Common myeloid progenitor, CD34-positive (primary cell): ENCODE measurements at regions of chr13 and their contacts with region 1.

Region 1: GRCh38 chr13:95403828-95404522 is 102.7 kb upstream of the ABCC4 start:
- DNase-seq: peak; percentile 72 to 84 (median 80)
- H3K4me3 ChIP-seq: peak overlapping the region in 6 of 7 experiments; percentile 53 to 77 (median 59)
- H3K27ac ChIP-seq: no peak overlapping the region
- H3K4me1 ChIP-seq: peaks cover 0 to 10% (median 8%) of the 10 kb centered on the region in 4 experiments
- H3K27me3 ChIP-seq: peaks cover 0 to 3% (median 0%) of the 10 kb centered on the region in 5 experiments

Region 2: GRCh38 chr13:94842901-94843300 is 561.1 kb before region 1 on chr13:
- CTCF ChIA-PET with region 1: no interaction called
- POLR2A ChIA-PET with region 1: no interaction called
- DNase-seq: no peak
- H3K4me3 ChIP-seq: no peak overlapping the region
- H3K27ac ChIP-seq: no peak overlapping the region
- H3K4me1 ChIP-seq: no peaks in the 10 kb centered on the region
- H3K27me3 ChIP-seq: no peaks in the 10 kb centered on the region

Region 3: DNA sequence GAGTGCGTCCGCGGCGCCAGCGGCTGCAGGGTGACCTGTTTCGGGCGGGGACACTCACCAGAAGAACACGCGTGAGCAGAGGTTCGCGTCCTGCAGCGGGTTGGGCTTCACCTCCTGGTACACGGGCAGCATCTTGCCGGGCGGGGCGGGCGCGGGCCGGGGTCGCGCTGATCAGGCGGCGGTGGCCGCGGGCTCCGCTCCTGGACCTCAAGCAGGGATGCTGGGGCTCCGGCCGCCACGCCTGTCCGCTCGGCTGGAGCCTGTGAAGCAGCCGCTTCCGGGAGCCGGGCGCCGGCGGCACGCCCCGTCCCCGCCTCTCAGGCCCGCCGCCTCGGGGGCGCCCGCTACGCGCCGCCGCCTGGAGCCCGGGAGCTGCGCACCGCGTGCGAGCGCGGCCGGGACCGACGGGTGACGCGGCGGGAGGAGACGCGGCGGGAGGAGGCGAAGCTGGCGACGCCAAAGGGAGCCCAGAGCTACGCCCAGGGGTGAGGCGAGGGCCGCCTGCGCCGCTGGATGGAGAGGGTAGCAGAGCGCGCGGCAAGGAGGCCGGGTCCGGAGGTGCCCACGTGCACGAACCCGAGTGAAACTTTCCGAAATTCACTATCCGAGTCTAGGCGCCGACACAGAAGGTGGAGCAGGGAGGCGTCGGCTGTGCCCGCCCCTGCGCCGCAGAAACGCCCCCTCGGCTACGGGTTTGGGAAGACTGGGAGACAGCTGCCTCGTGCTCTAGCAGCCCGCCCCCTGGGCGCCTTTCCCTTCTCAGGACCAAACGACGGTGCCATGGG is 102.6 kb before region 1 on chr13 and contains the start of gene ABCC4:
- CTCF ChIA-PET with region 1: interaction called, 107 read pairs
- POLR2A ChIA-PET with region 1: no interaction called
- DNase-seq: peak; percentile 67 to 79 (median 69)
- H3K4me3 ChIP-seq: peak within 1 kb of the TSS; percentile 65 to 87 (median 79)
- H3K27ac ChIP-seq: peak within 1 kb of the TSS in 1 of 2 experiments; percentile 29
- H3K4me1 ChIP-seq: peaks cover 0 to 37% (median 17%) of the 10 kb centered on the region in 4 experiments
- H3K27me3 ChIP-seq: no peaks in the 10 kb centered on the region

Region 4: GRCh38 chr13:95378603-95379002 is 25.4 kb before region 1 on chr13:
- CTCF ChIA-PET with region 1: interaction called, 110 read pairs
- POLR2A ChIA-PET with region 1: interaction called, 6 read pairs
- DNase-seq: no peak
- H3K4me3 ChIP-seq: no peak overlapping the region
- H3K27ac ChIP-seq: no peak overlapping the region
- H3K4me1 ChIP-seq: peaks cover 0 to 3% (median 1%) of the 10 kb centered on the region in 4 experiments
- H3K27me3 ChIP-seq: no peaks in the 10 kb centered on the region

Region 5: DNA sequence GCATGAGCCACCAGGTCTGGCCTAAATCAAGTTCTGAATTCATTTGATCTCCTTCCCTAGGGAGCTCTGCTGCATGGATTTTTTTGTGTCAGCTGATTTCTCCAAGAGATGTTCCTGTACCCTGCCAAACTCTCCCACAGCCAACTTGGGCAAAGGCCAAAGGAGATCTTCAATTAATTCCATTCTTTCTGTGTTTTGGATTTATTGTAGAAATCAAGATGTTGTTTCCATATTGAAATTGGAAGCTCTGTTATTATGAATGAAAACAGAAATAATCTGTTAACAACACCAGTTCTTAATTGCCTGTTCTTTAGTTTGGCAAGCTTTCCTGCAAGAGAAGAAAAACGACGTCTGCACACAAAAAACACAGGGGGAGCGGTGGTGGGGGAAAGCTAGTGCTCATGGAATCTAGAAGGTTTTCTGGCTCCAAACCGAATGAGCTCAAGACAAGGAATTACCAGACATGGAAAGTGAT is 16.2 kb before region 1 on chr13:
- CTCF ChIA-PET with region 1: interaction called, 110 read pairs
- POLR2A ChIA-PET with region 1: no interaction called
- DNase-seq: no peak
- H3K4me3 ChIP-seq: no peak overlapping the region
- H3K27ac ChIP-seq: no peak overlapping the region
- H3K4me1 ChIP-seq: peaks cover 0 to 9% (median under 1%) of the 10 kb centered on the region in 4 experiments
- H3K27me3 ChIP-seq: no peaks in the 10 kb centered on the region

Region 6: DNA sequence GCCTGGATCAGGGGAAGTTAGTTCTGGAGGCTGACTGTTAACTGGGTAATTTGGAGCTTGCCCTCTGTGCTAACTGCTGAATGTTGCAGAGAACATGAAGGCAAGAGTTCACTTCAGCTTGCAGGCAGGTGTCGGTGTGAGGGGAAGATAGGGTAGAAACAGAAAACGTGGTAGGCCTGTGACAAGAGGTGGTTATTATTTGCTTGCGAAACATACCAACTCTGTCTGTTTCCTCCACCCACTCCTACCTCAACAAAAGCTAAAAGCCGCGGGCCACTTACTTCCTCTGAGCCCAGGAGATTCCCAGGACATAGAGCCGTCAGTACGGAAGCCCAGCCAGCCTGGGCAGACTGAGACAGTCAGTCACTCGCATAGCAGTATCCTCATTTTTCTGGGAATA is 16.5 kb after region 1 on chr13:
- CTCF ChIA-PET with region 1: interaction called, 21 read pairs
- POLR2A ChIA-PET with region 1: no interaction called
- DNase-seq: peak in 2 of 3 donors; percentile 53 to 65
- H3K4me3 ChIP-seq: no peak overlapping the region
- H3K27ac ChIP-seq: no peak overlapping the region
- H3K4me1 ChIP-seq: peaks cover 0 to 10% (median 3%) of the 10 kb centered on the region in 4 experiments
- H3K27me3 ChIP-seq: no peaks in the 10 kb centered on the region

Region 7: GRCh38 chr13:95471960-95472359 is 68.0 kb after region 1 on chr13:
- CTCF ChIA-PET with region 1: interaction called, 29 read pairs
- POLR2A ChIA-PET with region 1: no interaction called
- DNase-seq: no peak
- H3K4me3 ChIP-seq: no peak overlapping the region
- H3K27ac ChIP-seq: no peak overlapping the region
- H3K4me1 ChIP-seq: no peaks in the 10 kb centered on the region
- H3K27me3 ChIP-seq: no peaks in the 10 kb centered on the region

Region 8: DNA sequence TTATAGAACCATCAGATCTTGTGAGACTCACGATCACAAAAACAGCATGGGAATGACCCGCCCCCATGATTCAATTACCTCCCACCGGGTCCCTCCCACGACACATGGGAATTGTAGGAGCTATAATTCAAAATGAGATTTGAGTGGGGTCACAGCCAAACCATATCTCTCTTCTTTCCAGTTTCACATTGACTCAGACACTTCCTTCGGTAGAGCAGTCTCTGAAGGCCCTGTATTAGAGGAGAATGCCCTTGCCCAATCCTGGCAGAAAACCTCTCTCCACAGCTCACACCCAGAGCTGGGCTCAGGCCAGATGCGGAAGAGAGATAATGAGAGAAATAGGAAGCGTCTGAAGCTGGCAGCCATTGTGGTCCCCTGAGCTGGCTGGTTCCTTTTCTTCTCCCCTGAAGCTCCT is 76.2 kb after region 1 on chr13:
- CTCF ChIA-PET with region 1: interaction called, 29 read pairs
- POLR2A ChIA-PET with region 1: no interaction called
- DNase-seq: peak; percentile 93 to 99 (median 98)
- H3K4me3 ChIP-seq: peak overlapping the region in 5 of 7 experiments; percentile 4 to 55 (median 50)
- H3K27ac ChIP-seq: peak overlapping the region; percentile 42 to 58
- H3K4me1 ChIP-seq: peaks cover 7 to 40% (median 26%) of the 10 kb centered on the region in 4 experiments
- H3K27me3 ChIP-seq: no peaks in the 10 kb centered on the region